ENCODE measurements at regions of chr10 and their contacts with region 1.

Region 1: GRCh38 chr10:7818295-7819122 is at the start of gene TAF3:
- DNase-seq: peak; percentile 92 to 96 (median 93)
- ATAC-seq: peak; percentile 79 to 93 (median 90)
- H3K4me3 ChIP-seq: peak within 1 kb of the TSS; percentile 84 to 99 (median 95)
- H3K27ac ChIP-seq: peak within 1 kb of the TSS in 10 of 12 donors; percentile 45 to 84 (median 77)
- H3K4me1 ChIP-seq: peaks cover 4 to 29% (median 18%) of the 10 kb centered on the region in 12 donors
- H3K27me3 ChIP-seq: no peaks in the 10 kb centered on the region
- CTCF ChIP-seq: no peak
- POLR2A ChIP-seq: peak in 1 of 2 donors; percentile 67
- total RNA-seq, gene TAF3: 5.9 to 14.0 (median 12.4) TPM

Region 2: GRCh38 chr10:7734821-7735220 is 83.7 kb before region 1 on chr10:
- intact Hi-C with region 1: no loop called
- DNase-seq: no peak
- ATAC-seq: no peak
- H3K4me3 ChIP-seq: no peak overlapping the region
- H3K27ac ChIP-seq: no peak overlapping the region
- H3K4me1 ChIP-seq: no peaks in the 10 kb centered on the region
- H3K27me3 ChIP-seq: no peaks in the 10 kb centered on the region
- CTCF ChIP-seq: no peak
- POLR2A ChIP-seq: no peak

Region 3: GRCh38 chr10:7787857-7788638 is 30.5 kb before region 1 on chr10 and contains the starts of genes ATP5F1C and KIN:
- intact Hi-C with region 1: loop called in 4 of 10 experiments (anchors 2 kb)
- DNase-seq: peak; percentile 97 to 98 (median 98)
- ATAC-seq: peak; percentile 96 to 98 (median 98)
- H3K4me3 ChIP-seq: peak within 1 kb of the TSS; percentile 76 to 97 (median 89)
- H3K27ac ChIP-seq: peak within 1 kb of the TSS; percentile 92 to 98 (median 95)
- H3K4me1 ChIP-seq: peaks cover 6 to 59% (median 47%) of the 10 kb centered on the region in 12 donors
- H3K27me3 ChIP-seq: no peaks in the 10 kb centered on the region
- CTCF ChIP-seq: no peak
- POLR2A ChIP-seq: peak; percentile 63 to 89
- total RNA-seq, gene ATP5F1C: 492 to 1,259 (median 784) TPM
- total RNA-seq, gene KIN: 2.5 to 10.7 (median 5.7) TPM

Region 4: DNA sequence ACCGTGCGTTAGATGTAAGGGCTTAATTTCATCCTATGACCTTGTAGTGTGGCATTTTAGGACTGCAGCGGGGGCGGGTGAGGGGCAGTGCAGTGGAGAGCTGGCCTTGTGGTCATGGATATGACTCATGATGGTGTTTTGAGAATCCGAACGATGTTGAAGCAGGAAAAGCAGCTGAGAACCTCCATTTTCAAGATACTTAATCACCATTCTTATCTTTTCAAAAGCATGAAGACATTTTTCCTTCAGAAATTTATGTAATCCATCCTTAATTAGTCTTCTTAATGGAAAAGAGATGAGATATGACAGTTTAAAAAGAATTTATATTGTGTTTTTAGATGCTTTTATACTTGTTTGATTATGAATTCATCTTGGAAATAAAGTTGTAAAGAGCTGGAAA is 20.9 kb before region 1 on chr10:
- intact Hi-C with region 1: loop called in 1 of 10 experiments (anchors 2 kb)
- DNase-seq: peak in 4 of 5 donors; percentile 59 to 70 (median 66)
- ATAC-seq: peak; percentile 80 to 94 (median 84)
- H3K4me3 ChIP-seq: no peak overlapping the region
- H3K27ac ChIP-seq: peak overlapping the region in 9 of 12 donors; percentile 47 to 84 (median 71)
- H3K4me1 ChIP-seq: peaks cover 0 to 60% (median 27%) of the 10 kb centered on the region in 12 donors
- H3K27me3 ChIP-seq: no peaks in the 10 kb centered on the region
- CTCF ChIP-seq: no peak
- POLR2A ChIP-seq: no peak

Region 5: GRCh38 chr10:7872041-7872442 is 53.5 kb after region 1 on chr10:
- intact Hi-C with region 1: no loop called
- DNase-seq: no peak
- ATAC-seq: no peak
- H3K4me3 ChIP-seq: peak overlapping the region in 9 of 12 donors; percentile 15 to 50 (median 35)
- H3K27ac ChIP-seq: no peak overlapping the region
- H3K4me1 ChIP-seq: peaks cover 0 to 4% (median 0%) of the 10 kb centered on the region in 12 donors
- H3K27me3 ChIP-seq: no peaks in the 10 kb centered on the region
- CTCF ChIP-seq: peak; percentile 63 to 90 (median 80)
- POLR2A ChIP-seq: no peak

Region 6: GRCh38 chr10:8600192-8600591 is 781.7 kb after region 1 on chr10:
- intact Hi-C with region 1: no loop called
- DNase-seq: no peak
- ATAC-seq: no peak
- H3K4me3 ChIP-seq: no peak overlapping the region
- H3K27ac ChIP-seq: no peak overlapping the region
- H3K4me1 ChIP-seq: no peaks in the 10 kb centered on the region
- H3K27me3 ChIP-seq: no peaks in the 10 kb centered on the region
- CTCF ChIP-seq: no peak
- POLR2A ChIP-seq: no peak

Region 7: GRCh38 chr10:8800428-8800827 is 981.9 kb after region 1 on chr10:
- intact Hi-C with region 1: no loop called
- DNase-seq: no peak
- ATAC-seq: no peak
- H3K4me3 ChIP-seq: no peak overlapping the region
- H3K27ac ChIP-seq: no peak overlapping the region
- H3K4me1 ChIP-seq: no peaks in the 10 kb centered on the region
- H3K27me3 ChIP-seq: no peaks in the 10 kb centered on the region
- CTCF ChIP-seq: no peak
- POLR2A ChIP-seq: no peak